H1 (cell line): ENCODE measurements at regions of chr12 and their contacts with region 1.

Region 1: GRCh38 chr12:27434673-27435565 is 11.6 kb upstream of the SMCO2 start:
- DNase-seq: no peak
- H3K4me3 ChIP-seq: no peak overlapping the region
- H3K27ac ChIP-seq: no peak overlapping the region
- H3K4me1 ChIP-seq: no peaks in the 10 kb centered on the region; a peak in 1 of 7 replicates
- H3K27me3 ChIP-seq: no peaks in the 10 kb centered on the region
- CTCF ChIP-seq: peak in 2 of 3 experiments; percentile 21 to 28; a peak in 1 of 4 replicates
- EP300 ChIP-seq: no peak
- POLR2A ChIP-seq: no peak
- RAD21 ChIP-seq: 0 out of 4 replicates have a peak, but pooled peaks of 1 of the 2 experiments have one; percentile 6

Region 2: GRCh38 chr12:26416550-26416949 is 1018.4 kb before region 1 on chr12:
- CTCF ChIA-PET with region 1: no interaction called
- POLR2A ChIA-PET with region 1: no interaction called
- DNase-seq: no peak
- H3K4me3 ChIP-seq: no peak overlapping the region
- H3K27ac ChIP-seq: no peak overlapping the region
- H3K4me1 ChIP-seq: no peaks in the 10 kb centered on the region
- H3K27me3 ChIP-seq: peaks cover 0 to 1% (median 0%) of the 10 kb centered on the region in 4 experiments; a peak in 1 of 7 replicates
- CTCF ChIP-seq: no peak
- EP300 ChIP-seq: no peak
- POLR2A ChIP-seq: no peak
- RAD21 ChIP-seq: no peak

Region 3: DNA sequence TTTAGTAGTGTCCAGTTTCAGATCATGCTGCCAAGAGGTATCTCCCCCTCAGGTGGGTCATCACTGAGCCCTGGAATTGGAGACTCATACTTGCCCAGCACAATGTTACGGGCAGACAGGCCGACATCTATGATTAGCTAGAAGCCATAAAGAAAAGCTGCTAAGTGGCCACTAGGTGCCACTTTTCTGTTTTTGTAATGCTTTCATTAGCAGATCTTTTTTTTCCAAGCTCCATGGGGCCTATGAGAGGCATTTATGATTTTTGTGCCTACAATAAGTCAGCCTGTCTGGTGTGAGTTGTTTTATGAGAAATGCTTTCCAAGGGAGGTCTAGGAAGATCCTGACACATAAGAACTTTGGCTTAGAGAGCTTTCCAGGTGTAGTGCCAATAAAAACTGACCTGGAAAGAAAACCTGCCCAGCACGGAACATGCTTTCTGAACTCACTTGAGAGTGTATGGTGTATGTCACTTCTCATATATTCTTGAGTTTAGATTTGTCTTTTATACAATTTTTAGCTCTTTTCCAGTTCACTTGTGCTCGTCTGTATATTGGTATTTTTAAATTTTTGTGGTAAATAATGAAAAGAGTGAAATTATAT is 10.2 kb before region 1 on chr12:
- CTCF ChIA-PET with region 1: interaction called, 47 read pairs
- POLR2A ChIA-PET with region 1: no interaction called
- DNase-seq: no peak
- H3K4me3 ChIP-seq: no peak overlapping the region
- H3K27ac ChIP-seq: no peak overlapping the region
- H3K4me1 ChIP-seq: no peaks in the 10 kb centered on the region
- H3K27me3 ChIP-seq: no peaks in the 10 kb centered on the region
- CTCF ChIP-seq: peak in 2 of 3 experiments; percentile 43 to 53; a peak in 2 of 4 replicates
- EP300 ChIP-seq: no peak
- POLR2A ChIP-seq: no peak
- RAD21 ChIP-seq: peak; percentile 50 to 60